CD8-positive, alpha-beta T cell (primary cell): ENCODE measurements at regions of chr5 and their contacts with region 1.

Region 1: GRCh38 chr5:160439205-160439600 is 17.5 kb downstream of the PTTG1 start:
- DNase-seq: peak; percentile 77 to 94 (median 89)
- ATAC-seq: peak; percentile 84
- H3K4me3 ChIP-seq: peak overlapping the region; percentile 66 to 72
- H3K4me3 Mint-ChIP-seq: peak overlapping the region; percentile 91
- H3K27ac ChIP-seq: peak overlapping the region; percentile 47 to 64
- H3K27ac Mint-ChIP-seq: peak overlapping the region; percentile 87
- H3K4me1 ChIP-seq: no peaks in the 10 kb centered on the region
- H3K4me1 Mint-ChIP-seq: peaks cover 7% of the 10 kb centered on the region
- H3K27me3 ChIP-seq: no peaks in the 10 kb centered on the region
- H3K27me3 Mint-ChIP-seq: peaks cover 10% of the 10 kb centered on the region
- CTCF ChIP-seq: peak; percentile 66

Region 2: GRCh38 chr5:159965031-159965837 is 474.0 kb before region 1 on chr5:
- CTCF ChIA-PET with region 1: no interaction called
- POLR2A ChIA-PET with region 1: no interaction called
- intact Hi-C with region 1: no loop called
- DNase-seq: peak in 3 of 9 experiments; percentile 8 to 23 (median 20)
- ATAC-seq: no peak
- H3K4me3 ChIP-seq: no peak overlapping the region
- H3K4me3 Mint-ChIP-seq: no peak overlapping the region
- H3K27ac ChIP-seq: no peak overlapping the region
- H3K27ac Mint-ChIP-seq: no peak overlapping the region
- H3K4me1 ChIP-seq: no peaks in the 10 kb centered on the region
- H3K4me1 Mint-ChIP-seq: no peaks in the 10 kb centered on the region
- H3K27me3 ChIP-seq: peaks cover 5 to 9% of the 10 kb centered on the region in 2 experiments
- H3K27me3 Mint-ChIP-seq: peaks cover 49% of the 10 kb centered on the region
- CTCF ChIP-seq: no peak

Region 3: GRCh38 chr5:160418561-160419457 is 20.4 kb before region 1 on chr5 and contains the start of gene SLU7:
- CTCF ChIA-PET with region 1: interaction called, 149 read pairs
- POLR2A ChIA-PET with region 1: interaction called, 16 read pairs
- intact Hi-C with region 1: loop called in 1 of 2 experiments (anchors 1 kb)
- DNase-seq: peak; percentile 88 to 96 (median 92)
- ATAC-seq: peak; percentile 79
- H3K4me3 ChIP-seq: peak within 1 kb of the TSS; percentile 59 to 95
- H3K4me3 Mint-ChIP-seq: peak within 1 kb of the TSS; percentile 95
- H3K27ac ChIP-seq: peak within 1 kb of the TSS; percentile 81 to 93
- H3K27ac Mint-ChIP-seq: peak within 1 kb of the TSS; percentile 98
- H3K4me1 ChIP-seq: peaks cover 32% of the 10 kb centered on the region
- H3K4me1 Mint-ChIP-seq: peaks cover 76% of the 10 kb centered on the region
- H3K27me3 ChIP-seq: no peaks in the 10 kb centered on the region
- H3K27me3 Mint-ChIP-seq: no peaks in the 10 kb centered on the region
- CTCF ChIP-seq: no peak
- total RNA-seq, gene SLU7: 127 to 136 TPM

Region 4: GRCh38 chr5:160458806-160459800 is 19.9 kb after region 1 on chr5:
- CTCF ChIA-PET with region 1: interaction called, 15 read pairs
- POLR2A ChIA-PET with region 1: interaction called, 5 read pairs
- intact Hi-C with region 1: no loop called
- DNase-seq: no peak
- ATAC-seq: no peak
- H3K4me3 ChIP-seq: no peak overlapping the region
- H3K4me3 Mint-ChIP-seq: no peak overlapping the region
- H3K27ac ChIP-seq: no peak overlapping the region
- H3K27ac Mint-ChIP-seq: no peak overlapping the region
- H3K4me1 ChIP-seq: no peaks in the 10 kb centered on the region
- H3K4me1 Mint-ChIP-seq: peaks cover 4% of the 10 kb centered on the region
- H3K27me3 ChIP-seq: no peaks in the 10 kb centered on the region
- H3K27me3 Mint-ChIP-seq: peaks cover 13% of the 10 kb centered on the region
- CTCF ChIP-seq: no peak

Region 5: GRCh38 chr5:160486573-160486972 is 47.4 kb after region 1 on chr5:
- CTCF ChIA-PET with region 1: interaction called, 17 read pairs
- POLR2A ChIA-PET with region 1: no interaction called
- intact Hi-C with region 1: no loop called
- DNase-seq: peak in 7 of 9 experiments; percentile 17 to 72 (median 59)
- ATAC-seq: peak; percentile 79
- H3K4me3 ChIP-seq: no peak overlapping the region
- H3K4me3 Mint-ChIP-seq: no peak overlapping the region
- H3K27ac ChIP-seq: peak overlapping the region; percentile 11 to 45
- H3K27ac Mint-ChIP-seq: peak overlapping the region; percentile 28
- H3K4me1 ChIP-seq: peaks cover 11% of the 10 kb centered on the region
- H3K4me1 Mint-ChIP-seq: peaks cover 23% of the 10 kb centered on the region
- H3K27me3 ChIP-seq: no peaks in the 10 kb centered on the region
- H3K27me3 Mint-ChIP-seq: no peaks in the 10 kb centered on the region
- CTCF ChIP-seq: no peak

Region 6: DNA sequence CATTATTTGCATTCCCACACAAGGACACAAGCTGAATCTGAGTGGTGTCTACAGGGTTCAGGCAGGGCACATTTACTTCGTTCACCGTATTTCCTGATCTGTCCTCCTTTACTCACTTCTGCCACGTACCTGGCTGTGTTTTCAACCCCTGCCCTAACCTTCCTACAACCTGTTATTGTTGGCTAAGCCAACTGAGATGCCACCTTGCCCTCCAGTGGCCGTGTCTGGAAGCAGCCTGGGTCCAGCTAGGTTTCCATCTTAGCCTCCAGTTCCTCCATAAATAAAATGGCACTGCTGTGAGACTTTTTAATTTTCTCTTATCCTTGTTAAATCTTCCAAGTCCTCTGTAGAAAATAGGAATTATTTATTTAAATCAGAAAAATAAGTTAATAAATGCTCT is 348.0 kb after region 1 on chr5:
- CTCF ChIA-PET with region 1: interaction called, 8 read pairs
- POLR2A ChIA-PET with region 1: no interaction called
- intact Hi-C with region 1: loop called (anchors 2 to 5 kb)
- DNase-seq: peak in 2 of 9 experiments; percentile 16 to 22
- ATAC-seq: no peak
- H3K4me3 ChIP-seq: no peak overlapping the region
- H3K4me3 Mint-ChIP-seq: no peak overlapping the region
- H3K27ac ChIP-seq: no peak overlapping the region
- H3K27ac Mint-ChIP-seq: no peak overlapping the region
- H3K4me1 ChIP-seq: no peaks in the 10 kb centered on the region
- H3K4me1 Mint-ChIP-seq: no peaks in the 10 kb centered on the region
- H3K27me3 ChIP-seq: no peaks in the 10 kb centered on the region
- H3K27me3 Mint-ChIP-seq: peaks cover 2% of the 10 kb centered on the region
- CTCF ChIP-seq: no peak